Psoas muscle (tissue), 8 donors: ENCODE measurements at regions of chr5 and their contacts with region 1.

Region 1: GRCh38 chr5:81719743-81720345 is 31.1 kb downstream of the SSBP2 start:
- DNase-seq: no peak
- ATAC-seq: no peak
- H3K4me3 ChIP-seq: no peak overlapping the region
- H3K27ac ChIP-seq: no peak overlapping the region
- H3K4me1 ChIP-seq: peaks cover 47% of the 10 kb centered on the region
- H3K27me3 ChIP-seq: no peaks in the 10 kb centered on the region
- CTCF ChIP-seq: no peak

Region 2: GRCh38 chr5:81675846-81676245 is 44.0 kb before region 1 on chr5:
- intact Hi-C with region 1: loop called in 1 of 2 experiments (anchors 10 kb)
- DNase-seq: no peak
- ATAC-seq: no peak
- H3K4me3 ChIP-seq: no peak overlapping the region
- H3K27ac ChIP-seq: no peak overlapping the region
- H3K4me1 ChIP-seq: peaks cover 14% of the 10 kb centered on the region
- H3K27me3 ChIP-seq: no peaks in the 10 kb centered on the region
- CTCF ChIP-seq: no peak